AG04450 (cell line): ENCODE measurements at regions of chr6 and their contacts with region 1.

Region 1: GRCh38 chr6:53492860-53493634 is 51.9 kb downstream of the GCLC start:
- DNase-seq: peak; percentile 36
- H3K4me3 ChIP-seq: peak overlapping the region; percentile 40
- H3K27ac ChIP-seq: peak overlapping the region; percentile 58
- H3K27me3 ChIP-seq: no peaks in the 10 kb centered on the region
- CTCF ChIP-seq: peak; percentile 72

Region 2: GRCh38 chr6:52801188-52801841 is 691.7 kb before region 1 on chr6:
- CTCF ChIA-PET with region 1: no interaction called
- POLR2A ChIA-PET with region 1: no interaction called
- DNase-seq: no peak
- H3K4me3 ChIP-seq: no peak overlapping the region
- H3K27ac ChIP-seq: no peak overlapping the region
- H3K27me3 ChIP-seq: peaks cover 4% of the 10 kb centered on the region
- CTCF ChIP-seq: no peak

Region 3: GRCh38 chr6:53517056-53517455 is 24.0 kb after region 1 on chr6:
- CTCF ChIA-PET with region 1: interaction called, 35 read pairs
- POLR2A ChIA-PET with region 1: interaction called, 22 read pairs
- DNase-seq: no peak
- H3K4me3 ChIP-seq: no peak overlapping the region
- H3K27ac ChIP-seq: no peak overlapping the region
- H3K27me3 ChIP-seq: no peaks in the 10 kb centered on the region
- CTCF ChIP-seq: no peak

Region 4: GRCh38 chr6:53544470-53545308 is 51.6 kb after region 1 on chr6 and contains the start of gene GCLC:
- CTCF ChIA-PET with region 1: interaction called, 10 read pairs
- POLR2A ChIA-PET with region 1: interaction called, 21 read pairs
- DNase-seq: peak; percentile 89
- H3K4me3 ChIP-seq: peak within 1 kb of the TSS; percentile 95
- H3K27ac ChIP-seq: peak within 1 kb of the TSS; percentile 75
- H3K27me3 ChIP-seq: no peaks in the 10 kb centered on the region
- CTCF ChIP-seq: peak; percentile 47
- polyA plus RNA-seq, gene GCLC: 74.8 and 89.3 TPM in 2 replicates

Region 5: DNA sequence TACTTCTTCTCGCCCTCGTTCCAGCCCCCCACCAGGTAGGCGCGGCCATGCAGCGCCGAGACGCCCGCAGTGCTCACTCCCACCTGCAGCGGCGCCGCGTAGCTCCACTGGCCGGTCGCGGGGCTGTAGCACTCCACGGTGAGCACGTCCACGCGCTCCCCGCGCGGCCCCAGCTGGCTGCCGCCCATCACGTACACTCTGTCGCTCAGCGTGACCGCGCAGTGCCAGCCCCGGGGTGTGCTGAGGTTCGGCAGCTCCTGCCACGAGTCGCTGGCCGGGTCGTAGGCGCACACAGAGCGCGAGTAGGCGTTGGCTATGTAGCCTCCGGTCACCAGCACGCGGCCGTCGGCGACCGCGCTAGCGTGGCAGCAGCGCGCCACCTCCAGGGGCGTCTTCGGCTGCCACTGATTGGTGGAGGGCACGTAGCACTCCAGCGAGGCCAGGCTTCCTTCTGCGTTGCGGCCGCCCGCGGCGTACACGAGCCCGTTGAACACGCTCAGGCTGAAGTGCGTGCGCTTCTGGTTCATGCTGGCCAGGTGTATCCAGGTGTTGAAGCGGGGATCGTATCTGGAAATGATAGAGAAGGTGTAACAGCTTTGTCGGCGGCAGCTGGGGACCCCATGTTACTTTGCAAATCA is 158.8 kb after region 1 on chr6:
- CTCF ChIA-PET with region 1: interaction called, 127 read pairs
- POLR2A ChIA-PET with region 1: interaction called, 7 read pairs
- DNase-seq: no peak
- H3K4me3 ChIP-seq: peak overlapping the region; percentile 75
- H3K27ac ChIP-seq: no peak overlapping the region
- H3K27me3 ChIP-seq: no peaks in the 10 kb centered on the region
- CTCF ChIP-seq: peak; percentile 24

Region 6: DNA sequence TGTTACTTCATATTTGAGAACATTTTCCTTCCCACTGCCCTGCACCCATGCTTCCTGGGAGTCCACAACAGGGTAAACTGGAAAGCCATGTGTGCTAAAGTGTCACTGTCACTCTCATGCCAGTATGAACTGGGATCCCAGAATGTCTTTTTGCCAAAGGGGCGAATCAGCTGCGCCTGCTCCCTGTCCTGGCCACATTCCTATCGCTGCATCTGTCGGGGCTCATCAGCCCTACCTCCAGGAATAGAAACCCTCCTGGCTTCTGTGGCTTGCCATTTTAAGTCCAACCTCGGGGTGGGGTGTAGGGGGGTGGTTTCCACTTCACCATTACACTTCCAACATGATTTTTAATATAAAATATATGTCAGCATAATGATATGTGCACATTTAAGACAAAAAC is 171.6 kb after region 1 on chr6:
- CTCF ChIA-PET with region 1: interaction called, 17 read pairs
- POLR2A ChIA-PET with region 1: no interaction called
- DNase-seq: no peak
- H3K4me3 ChIP-seq: no peak overlapping the region
- H3K27ac ChIP-seq: no peak overlapping the region
- H3K27me3 ChIP-seq: peaks cover 7% of the 10 kb centered on the region
- CTCF ChIP-seq: no peak

Region 7: DNA sequence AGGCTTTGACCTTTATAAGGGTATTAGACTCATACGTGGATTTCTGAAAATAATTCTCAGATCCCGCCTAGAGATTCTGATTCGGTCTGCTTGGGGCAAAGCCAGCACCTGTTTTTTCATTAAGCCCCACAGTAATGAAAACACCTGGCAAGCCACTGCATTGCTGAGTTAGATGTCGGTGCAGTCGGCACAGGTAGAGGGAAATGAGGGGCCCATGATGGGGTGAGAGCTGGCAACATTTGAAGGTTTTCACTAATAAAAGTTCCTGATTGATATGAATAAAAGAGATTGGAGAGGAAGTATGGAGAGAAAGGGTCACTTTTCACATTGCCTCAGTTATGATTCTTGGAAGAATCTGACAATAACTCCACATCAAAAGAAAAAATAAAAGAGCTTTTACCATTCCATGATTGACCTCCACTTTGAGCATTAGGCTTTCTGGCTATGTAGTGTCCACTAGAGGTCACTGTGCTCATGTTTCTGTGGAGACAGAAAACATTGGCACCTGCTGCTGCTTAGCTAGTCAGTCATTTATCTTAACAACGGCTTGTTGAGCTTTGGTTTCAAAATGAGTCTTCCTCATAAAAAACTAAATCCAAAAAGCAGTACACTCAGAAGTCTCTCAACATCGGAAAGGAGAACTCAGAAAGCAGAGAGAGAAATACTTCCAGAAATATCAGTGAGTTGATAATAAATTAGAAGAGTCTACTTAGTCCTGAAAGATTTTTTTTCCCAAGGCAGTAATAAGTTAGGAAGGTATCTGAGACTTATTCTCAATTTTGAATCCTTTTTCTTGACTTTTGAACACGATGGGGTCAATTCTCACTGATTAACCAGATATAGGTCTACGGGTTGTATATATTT is 225.8 kb after region 1 on chr6:
- CTCF ChIA-PET with region 1: interaction called, 541 read pairs
- POLR2A ChIA-PET with region 1: no interaction called
- DNase-seq: peak; percentile 48
- H3K4me3 ChIP-seq: no peak overlapping the region
- H3K27ac ChIP-seq: no peak overlapping the region
- H3K27me3 ChIP-seq: no peaks in the 10 kb centered on the region
- CTCF ChIP-seq: peak; percentile 83